ENCODE measurements at regions of chr10 and their contacts with region 1.

Region 1: DNA sequence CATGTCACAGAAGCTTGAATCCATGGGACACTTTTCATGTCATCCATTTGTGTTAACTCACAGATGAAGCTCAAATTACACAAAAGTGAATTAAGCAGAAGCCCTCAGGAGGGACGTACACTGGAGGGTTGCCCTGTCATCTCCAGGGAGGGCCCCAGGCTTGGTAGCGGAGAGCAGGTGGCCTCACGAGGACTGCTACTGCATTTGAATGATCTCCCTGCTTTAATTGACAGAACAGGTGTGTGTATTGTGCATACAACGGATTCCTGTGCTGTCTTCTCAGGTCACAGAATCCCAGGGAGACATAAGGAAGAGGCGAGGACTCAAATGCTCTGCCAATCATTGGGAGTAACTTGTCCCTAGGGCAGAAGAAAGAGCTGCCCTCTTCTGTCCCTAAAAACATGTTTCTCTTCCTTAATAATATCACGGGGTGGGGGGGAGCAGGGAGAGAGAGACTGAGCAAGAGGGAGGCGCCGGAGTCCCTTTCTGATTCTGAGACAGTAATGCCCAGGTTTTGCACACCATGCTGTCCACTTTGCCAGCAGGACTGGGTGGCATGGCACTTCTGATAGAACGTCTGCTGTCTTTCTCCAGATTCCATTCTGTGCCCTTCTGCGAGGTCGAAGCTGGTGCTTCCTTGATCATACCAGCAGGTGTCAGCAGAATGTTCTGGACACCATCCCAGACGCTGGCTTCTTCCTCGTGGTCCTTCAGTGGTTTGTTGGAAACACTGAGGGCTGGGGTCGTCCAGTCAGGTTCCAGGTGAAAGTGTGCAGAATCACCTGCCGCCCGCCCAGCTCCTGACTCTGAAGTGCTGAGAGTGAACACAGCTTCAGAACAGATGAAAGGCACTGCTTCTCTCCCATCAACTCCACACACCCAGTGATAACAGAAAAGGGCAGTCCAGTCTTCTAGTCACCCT is 26.2 kb upstream of the RASGEF1A start:
- DNase-seq: peak; percentile 57
- ATAC-seq: peak; percentile 92
- H3K4me3 Mint-ChIP-seq: no peak overlapping the region
- H3K27ac Mint-ChIP-seq: no peak overlapping the region
- H3K4me1 Mint-ChIP-seq: peaks cover 3% of the 10 kb centered on the region; the same call in 1 of the 2 replicates
- H3K27me3 Mint-ChIP-seq: no peaks in the 10 kb centered on the region; the same call in 1 of the 2 replicates
- CTCF ChIP-seq: no peak

Region 2: GRCh38 chr10:43322769-43323168 is 29.8 kb after region 1 on chr10:
- CTCF ChIA-PET with region 1: interaction called, 12 read pairs
- POLR2A ChIA-PET with region 1: no interaction called
- DNase-seq: peak; percentile 99
- ATAC-seq: peak; percentile 99
- H3K4me3 Mint-ChIP-seq: peak overlapping the region; percentile 62
- H3K27ac Mint-ChIP-seq: no peak overlapping the region
- H3K4me1 Mint-ChIP-seq: peaks cover 33% of the 10 kb centered on the region
- H3K27me3 Mint-ChIP-seq: no peaks in the 10 kb centered on the region; the same call in 1 of the 2 replicates
- CTCF ChIP-seq: no peak

Region 3: GRCh38 chr10:43348511-43349312 is 55.7 kb after region 1 on chr10:
- CTCF ChIA-PET with region 1: interaction called, 35 read pairs
- POLR2A ChIA-PET with region 1: interaction called, 3 read pairs
- DNase-seq: peak; percentile 88
- ATAC-seq: peak; percentile 99
- H3K4me3 Mint-ChIP-seq: no peak overlapping the region
- H3K27ac Mint-ChIP-seq: peak overlapping the region; percentile 81
- H3K4me1 Mint-ChIP-seq: peaks cover 20% of the 10 kb centered on the region
- H3K27me3 Mint-ChIP-seq: no peaks in the 10 kb centered on the region
- CTCF ChIP-seq: peak; percentile 87

Region 4: GRCh38 chr10:43557214-43557613 is 264.2 kb after region 1 on chr10:
- CTCF ChIA-PET with region 1: no interaction called
- POLR2A ChIA-PET with region 1: no interaction called
- DNase-seq: no peak
- ATAC-seq: no peak
- H3K4me3 Mint-ChIP-seq: no peak overlapping the region
- H3K27ac Mint-ChIP-seq: no peak overlapping the region
- H3K4me1 Mint-ChIP-seq: no peaks in the 10 kb centered on the region
- H3K27me3 Mint-ChIP-seq: peaks cover 2% of the 10 kb centered on the region; the same call in 1 of the 2 replicates
- CTCF ChIP-seq: no peak